Vagina (tissue), 2 donors: ENCODE measurements at regions of chr10 and their contacts with region 1.

Region 1: GRCh38 chr10:44010873-44011602 is 362.4 kb upstream of the ZNF32 start:
- DNase-seq: peak in 1 of 2 donors; percentile 34
- H3K4me3 ChIP-seq: no peak overlapping the region
- H3K27ac ChIP-seq: no peak overlapping the region
- H3K4me1 ChIP-seq: peaks cover 21% of the 10 kb centered on the region
- H3K27me3 ChIP-seq: no peaks in the 10 kb centered on the region
- CTCF ChIP-seq: no peak
- POLR2A ChIP-seq: no peak

Region 2: DNA sequence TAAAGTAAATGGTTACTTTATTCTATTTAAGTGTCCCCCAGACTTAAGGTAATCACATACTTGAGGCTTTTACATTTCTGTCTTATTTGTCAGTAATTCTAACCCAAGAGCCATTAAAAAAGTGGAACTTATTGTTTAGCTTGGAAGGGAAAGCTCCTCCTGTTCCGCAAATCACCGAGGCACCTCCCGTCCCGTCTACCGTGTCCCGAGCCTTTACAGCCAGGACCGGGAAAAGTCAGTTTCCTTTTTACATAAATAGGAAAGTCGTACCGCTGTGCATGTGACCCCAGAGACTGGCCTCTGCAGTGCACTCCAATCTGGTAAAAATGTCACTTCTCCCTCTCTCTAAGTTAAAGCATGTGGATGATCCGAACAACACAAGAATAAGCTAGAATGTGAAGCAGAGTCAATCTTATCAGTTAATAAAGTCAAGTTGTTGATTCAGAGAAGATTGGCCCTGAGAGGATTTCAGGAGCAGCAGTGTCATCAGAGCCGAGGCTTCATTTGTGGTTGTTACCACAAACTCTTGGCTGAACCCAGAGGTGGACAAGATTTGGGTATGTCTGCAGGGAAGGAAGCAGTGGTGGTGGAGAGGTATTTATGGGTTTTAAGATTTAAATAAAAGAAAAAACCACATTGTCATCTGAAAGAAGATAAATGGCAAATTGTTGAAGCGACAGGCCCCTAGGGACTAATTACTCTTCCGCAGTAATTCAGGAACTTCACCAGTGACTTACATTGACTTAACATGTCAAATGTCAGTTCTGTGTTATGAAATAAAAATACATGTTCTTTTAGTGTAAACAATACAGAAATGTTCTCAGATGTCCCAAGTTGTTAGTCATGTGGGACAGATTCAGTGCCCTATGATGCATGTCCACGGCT is 45.8 kb before region 1 on chr10:
- intact Hi-C with region 1: loop called (anchors 10 kb)
- DNase-seq: peak in 1 of 2 donors; percentile 84
- H3K4me3 ChIP-seq: no peak overlapping the region
- H3K27ac ChIP-seq: peak overlapping the region; percentile 24
- H3K4me1 ChIP-seq: peaks cover 34% of the 10 kb centered on the region
- H3K27me3 ChIP-seq: no peaks in the 10 kb centered on the region
- CTCF ChIP-seq: no peak
- POLR2A ChIP-seq: no peak

Region 3: DNA sequence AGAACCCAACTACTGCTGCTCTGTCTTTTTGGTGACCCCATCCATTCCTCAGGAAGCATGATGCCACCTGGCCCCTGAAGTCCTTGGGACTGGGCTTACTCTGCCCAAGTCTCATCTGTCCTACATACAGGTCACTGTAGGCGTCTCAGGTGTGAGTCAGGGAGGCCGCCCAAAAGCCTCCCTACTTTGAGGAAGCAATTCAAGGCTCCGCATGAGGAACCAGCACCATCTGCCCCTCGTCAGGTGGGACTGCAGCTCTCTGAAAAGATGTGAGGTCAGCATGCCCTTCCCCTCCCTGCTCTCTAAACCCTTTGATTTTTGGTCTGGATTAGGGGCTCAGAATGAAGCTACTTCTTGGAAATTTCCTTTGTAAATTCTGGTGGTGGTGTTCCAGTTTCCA is 19.1 kb after region 1 on chr10:
- intact Hi-C with region 1: no loop called
- DNase-seq: peak; percentile 28 to 86
- H3K4me3 ChIP-seq: no peak overlapping the region
- H3K27ac ChIP-seq: no peak overlapping the region
- H3K4me1 ChIP-seq: peaks cover 14% of the 10 kb centered on the region
- H3K27me3 ChIP-seq: no peaks in the 10 kb centered on the region
- CTCF ChIP-seq: no peak
- POLR2A ChIP-seq: no peak